ENCODE measurements at regions of chr6 and their contacts with region 1.

Region 1: GRCh38 chr6:144284783-144285547 is at the start of gene UTRN:
- DNase-seq: peak; percentile 71
- ATAC-seq: peak; percentile 75
- H3K4me3 Mint-ChIP-seq: peak within 1 kb of the TSS; percentile 88
- H3K27ac Mint-ChIP-seq: peak within 1 kb of the TSS; percentile 73
- H3K4me1 Mint-ChIP-seq: peaks cover 16% of the 10 kb centered on the region
- H3K27me3 Mint-ChIP-seq: peaks cover 37% of the 10 kb centered on the region
- total RNA-seq, gene UTRN: 43.4 to 46.2 TPM

Region 2: GRCh38 chr6:144334131-144334708 is 49.3 kb after region 1 on chr6:
- CTCF ChIA-PET with region 1: no interaction called
- POLR2A ChIA-PET with region 1: no interaction called
- intact Hi-C with region 1: loop called in 1 of 2 experiments (anchors 2 kb)
- DNase-seq: peak; percentile 81
- ATAC-seq: peak; percentile 79
- H3K4me3 Mint-ChIP-seq: peak overlapping the region; percentile 60
- H3K27ac Mint-ChIP-seq: peak overlapping the region; percentile 80
- H3K4me1 Mint-ChIP-seq: peaks cover 54% of the 10 kb centered on the region
- H3K27me3 Mint-ChIP-seq: no peaks in the 10 kb centered on the region

Region 3: GRCh38 chr6:144469144-144469575 is 184.2 kb after region 1 on chr6:
- CTCF ChIA-PET with region 1: interaction called, 3 read pairs
- POLR2A ChIA-PET with region 1: no interaction called
- intact Hi-C with region 1: loop called in 1 of 2 experiments (anchors 5 kb)
- DNase-seq: peak; percentile 41
- ATAC-seq: peak; percentile 89
- H3K4me3 Mint-ChIP-seq: peak overlapping the region; percentile 62
- H3K27ac Mint-ChIP-seq: peak overlapping the region; percentile 92
- H3K4me1 Mint-ChIP-seq: peaks cover 27% of the 10 kb centered on the region
- H3K27me3 Mint-ChIP-seq: no peaks in the 10 kb centered on the region

Measured in activated CD4-positive, alpha-beta T cell treated with anti-CD3 and anti-CD28 coated beads for 36 hours (primary cell).